Activated CD8-positive, alpha-beta T cell treated with anti-CD3 and anti-CD28 coated beads for 36 hours (primary cell): ENCODE measurements at regions of chr10 and their contacts with region 1.

Region 1: DNA sequence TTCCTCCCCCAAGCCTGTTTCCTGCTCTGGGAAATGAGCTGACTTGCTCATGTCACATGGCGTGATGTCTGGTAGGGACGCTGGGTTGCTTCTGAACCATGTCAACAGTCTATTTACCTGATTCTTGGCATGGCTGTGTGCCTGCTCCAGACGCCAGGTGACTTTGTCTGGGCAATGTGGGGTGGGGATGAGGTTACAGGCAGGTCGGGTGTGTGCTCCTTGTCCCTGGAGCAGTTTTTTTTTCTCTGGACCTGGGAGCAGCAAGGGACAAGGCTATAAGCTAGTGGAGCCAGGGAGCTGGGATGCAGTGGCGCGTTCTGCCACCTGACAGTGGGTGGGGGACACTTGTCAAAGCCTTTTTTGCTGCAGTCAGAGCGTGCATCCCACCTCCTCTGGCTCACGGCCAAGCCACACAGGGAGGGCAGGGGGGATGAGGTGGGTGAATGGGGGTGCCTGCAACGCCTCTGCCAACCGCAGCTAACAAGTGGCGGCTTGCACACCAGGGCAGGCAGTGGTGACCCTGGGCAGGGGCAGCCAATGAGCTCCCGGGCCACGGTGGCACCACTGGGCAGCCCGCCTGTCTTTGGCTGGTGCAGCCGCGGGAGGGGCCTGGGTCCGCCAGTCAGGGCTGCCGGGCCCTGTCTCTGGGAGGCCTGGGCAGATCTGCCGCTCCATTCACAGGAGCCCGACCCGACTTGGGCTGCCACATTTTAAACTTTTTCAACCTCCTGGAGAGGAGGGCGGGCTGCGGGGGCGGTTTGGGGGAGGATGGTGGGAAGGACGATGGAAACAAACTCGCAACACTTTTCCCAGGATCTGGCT is 22.9 kb downstream of the DNAJB12 start:
- DNase-seq: peak; percentile 98
- ATAC-seq: peak; percentile 70
- H3K4me3 Mint-ChIP-seq: peak overlapping the region; percentile 89
- H3K27ac Mint-ChIP-seq: peak overlapping the region; percentile 97
- H3K4me1 Mint-ChIP-seq: peaks cover 88% of the 10 kb centered on the region
- H3K27me3 Mint-ChIP-seq: peaks cover under 1% of the 10 kb centered on the region
- CTCF ChIP-seq: no peak

Region 2: GRCh38 chr10:72126184-72126871 is 205.5 kb before region 1 on chr10:
- CTCF ChIA-PET with region 1: interaction called, 21 read pairs
- POLR2A ChIA-PET with region 1: no interaction called
- intact Hi-C with region 1: no loop called
- DNase-seq: no peak
- ATAC-seq: no peak
- H3K4me3 Mint-ChIP-seq: no peak overlapping the region
- H3K27ac Mint-ChIP-seq: no peak overlapping the region
- H3K4me1 Mint-ChIP-seq: peaks cover 30% of the 10 kb centered on the region
- H3K27me3 Mint-ChIP-seq: no peaks in the 10 kb centered on the region
- CTCF ChIP-seq: peak; percentile 28

Region 3: GRCh38 chr10:72223743-72224101 is 108.1 kb before region 1 on chr10:
- CTCF ChIA-PET with region 1: interaction called, 40 read pairs
- POLR2A ChIA-PET with region 1: interaction called, 4 read pairs
- intact Hi-C with region 1: loop called (anchors 5 kb)
- DNase-seq: peak; percentile 59
- ATAC-seq: peak; percentile 54
- H3K4me3 Mint-ChIP-seq: peak overlapping the region; percentile 4
- H3K27ac Mint-ChIP-seq: peak overlapping the region; percentile 91
- H3K4me1 Mint-ChIP-seq: peaks cover 52% of the 10 kb centered on the region
- H3K27me3 Mint-ChIP-seq: no peaks in the 10 kb centered on the region
- CTCF ChIP-seq: no peak

Region 4: GRCh38 chr10:72273410-72274212 is 58.2 kb before region 1 on chr10 and contains the start of gene DDIT4:
- CTCF ChIA-PET with region 1: interaction called, 164 read pairs
- POLR2A ChIA-PET with region 1: interaction called, 290 read pairs
- intact Hi-C with region 1: loop called (anchors 2 kb)
- DNase-seq: peak; percentile 100
- ATAC-seq: peak; percentile 86
- H3K4me3 Mint-ChIP-seq: peak within 1 kb of the TSS; percentile 100
- H3K27ac Mint-ChIP-seq: peak within 1 kb of the TSS; percentile 97
- H3K4me1 Mint-ChIP-seq: peaks cover 43% of the 10 kb centered on the region
- H3K27me3 Mint-ChIP-seq: no peaks in the 10 kb centered on the region
- CTCF ChIP-seq: no peak
- total RNA-seq, gene DDIT4: 1,071 to 1,096 TPM

Region 5: GRCh38 chr10:72308320-72308987 is 23.4 kb before region 1 on chr10:
- CTCF ChIA-PET with region 1: interaction called, 13 read pairs
- POLR2A ChIA-PET with region 1: interaction called, 796 read pairs
- intact Hi-C with region 1: no loop called
- DNase-seq: peak; percentile 69
- ATAC-seq: peak; percentile 51
- H3K4me3 Mint-ChIP-seq: no peak overlapping the region
- H3K27ac Mint-ChIP-seq: peak overlapping the region; percentile 86
- H3K4me1 Mint-ChIP-seq: peaks cover 68% of the 10 kb centered on the region
- H3K27me3 Mint-ChIP-seq: no peaks in the 10 kb centered on the region
- CTCF ChIP-seq: no peak